ENCODE measurements at regions of chr10 and their contacts with region 1.

Region 1: DNA sequence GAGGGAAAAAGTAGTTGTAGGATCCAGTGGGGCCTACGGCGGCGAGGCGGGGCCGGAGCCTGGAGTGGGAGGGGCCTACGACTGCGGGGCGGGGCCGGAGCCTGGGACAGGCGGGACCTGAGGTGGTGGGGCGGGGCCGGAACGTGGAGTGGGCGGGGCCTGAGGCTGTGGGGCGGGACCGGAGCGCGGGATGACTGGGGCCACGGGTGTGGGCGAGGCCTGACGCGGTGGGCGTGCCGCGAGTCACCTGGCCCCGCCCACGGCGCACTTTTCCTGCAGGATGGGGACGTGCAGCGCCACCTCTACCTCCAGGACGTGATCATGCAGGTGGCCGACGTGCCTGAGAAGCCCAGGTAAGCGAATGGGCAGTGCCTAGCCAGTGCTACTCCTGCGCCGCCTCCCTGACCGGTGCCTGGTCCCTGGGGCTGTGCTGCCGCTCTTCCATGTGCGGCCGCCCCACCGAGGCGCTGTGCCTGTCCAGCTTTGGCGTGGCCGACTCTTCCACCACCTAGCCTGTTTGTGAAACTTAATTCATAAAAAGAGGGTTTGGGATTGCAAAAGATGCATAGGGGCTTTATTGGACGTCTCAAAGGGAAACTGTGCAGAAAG is 501 bp downstream of the ZNF511 start:
- DNase-seq: peak; percentile 99
- H3K4me3 ChIP-seq: peak overlapping the region; percentile 97 to 98
- H3K27ac ChIP-seq: peak overlapping the region; percentile 93 to 97
- H3K4me1 ChIP-seq: peaks cover 8 to 19% of the 10 kb centered on the region in 2 experiments; a peak in 2 of 4 replicates
- H3K27me3 ChIP-seq: no peaks in the 10 kb centered on the region
- CTCF ChIP-seq: no peak
- EP300 ChIP-seq: no peak
- RAD21 ChIP-seq: no peak

Region 2: GRCh38 chr10:133295426-133296320 is 13.5 kb before region 1 on chr10:
- CTCF ChIA-PET with region 1: interaction called, 10 read pairs
- POLR2A ChIA-PET with region 1: no interaction called
- DNase-seq: no peak
- H3K4me3 ChIP-seq: no peak overlapping the region
- H3K27ac ChIP-seq: no peak overlapping the region
- H3K4me1 ChIP-seq: peaks cover 0 to 14% of the 10 kb centered on the region in 2 experiments; a peak in 2 of 4 replicates
- H3K27me3 ChIP-seq: no peaks in the 10 kb centered on the region
- CTCF ChIP-seq: no peak
- EP300 ChIP-seq: no peak
- RAD21 ChIP-seq: no peak

Region 3: GRCh38 chr10:133324198-133324792 is 15.1 kb after region 1 on chr10:
- CTCF ChIA-PET with region 1: interaction called, 24 read pairs
- POLR2A ChIA-PET with region 1: interaction called, 5 read pairs
- DNase-seq: peak; percentile 91
- H3K4me3 ChIP-seq: peak overlapping the region in 1 of 2 experiments; percentile 48; a peak in 2 of 4 replicates
- H3K27ac ChIP-seq: peak overlapping the region in 1 of 2 experiments; percentile 93; a peak in 2 of 4 replicates
- H3K4me1 ChIP-seq: peaks cover 7 to 36% of the 10 kb centered on the region in 2 experiments; a peak in 2 of 4 replicates
- H3K27me3 ChIP-seq: no peaks in the 10 kb centered on the region
- CTCF ChIP-seq: no peak
- EP300 ChIP-seq: no peak
- RAD21 ChIP-seq: no peak